Natural killer cell (primary cell): ENCODE measurements at regions of chr3 and their contacts with region 1.

Region 1: DNA sequence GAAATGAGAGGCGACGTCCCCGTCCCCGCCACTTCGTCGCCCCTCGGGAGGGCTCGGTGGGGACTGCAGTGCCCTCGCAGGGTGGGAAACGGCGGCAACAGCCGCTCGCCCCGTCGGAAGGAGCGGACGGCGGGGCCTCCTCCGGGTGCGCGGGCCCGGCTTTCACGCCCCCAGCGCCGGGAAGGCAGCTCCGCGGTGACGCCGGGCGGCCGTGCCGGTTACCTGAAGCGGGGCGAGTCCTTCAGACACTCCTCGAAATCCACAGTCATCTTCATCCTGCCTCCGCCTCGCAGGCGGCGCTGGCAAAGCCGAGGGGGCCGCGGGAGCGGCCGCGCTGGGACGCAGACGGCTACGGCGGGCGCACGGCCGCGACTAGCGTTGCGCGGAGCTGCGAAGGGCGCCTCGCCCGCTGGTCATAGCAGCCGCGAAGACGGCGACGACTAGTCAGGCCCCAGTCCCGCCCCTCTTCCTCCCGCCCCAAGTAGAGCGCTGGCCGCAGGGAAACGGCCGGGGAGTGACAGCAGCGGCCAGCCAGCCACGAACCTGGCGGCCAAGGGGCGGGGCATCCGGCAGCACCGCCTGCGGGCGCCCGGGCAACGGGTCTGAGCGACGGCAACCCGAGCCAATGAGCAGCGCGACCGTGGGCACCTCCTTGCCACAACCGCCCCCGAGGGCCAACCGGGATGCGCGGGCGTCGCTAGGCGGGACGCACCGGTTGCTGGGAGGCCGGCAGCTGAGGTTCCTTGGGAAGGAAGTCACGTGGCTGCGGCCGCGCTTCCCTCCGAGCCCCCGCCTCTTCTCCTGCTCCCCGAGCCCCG is at the start of gene ACAP2:
- DNase-seq: peak; percentile 99
- ATAC-seq: peak; percentile 88 to 96 (median 91)
- H3K4me3 ChIP-seq: peak within 1 kb of the TSS; percentile 92
- H3K4me3 Mint-ChIP-seq: peak within 1 kb of the TSS; percentile 97
- H3K27ac ChIP-seq: peak within 1 kb of the TSS; percentile 89
- H3K27ac Mint-ChIP-seq: peak within 1 kb of the TSS; percentile 92 to 97
- H3K4me1 ChIP-seq: peaks cover 17% of the 10 kb centered on the region
- H3K4me1 Mint-ChIP-seq: peaks cover 37 to 41% of the 10 kb centered on the region in 2 donors
- H3K27me3 ChIP-seq: no peaks in the 10 kb centered on the region
- H3K27me3 Mint-ChIP-seq: no peaks in the 10 kb centered on the region
- CTCF ChIP-seq: no peak
- total RNA-seq, gene ACAP2: 103 to 132 (median 128) TPM

Region 2: DNA sequence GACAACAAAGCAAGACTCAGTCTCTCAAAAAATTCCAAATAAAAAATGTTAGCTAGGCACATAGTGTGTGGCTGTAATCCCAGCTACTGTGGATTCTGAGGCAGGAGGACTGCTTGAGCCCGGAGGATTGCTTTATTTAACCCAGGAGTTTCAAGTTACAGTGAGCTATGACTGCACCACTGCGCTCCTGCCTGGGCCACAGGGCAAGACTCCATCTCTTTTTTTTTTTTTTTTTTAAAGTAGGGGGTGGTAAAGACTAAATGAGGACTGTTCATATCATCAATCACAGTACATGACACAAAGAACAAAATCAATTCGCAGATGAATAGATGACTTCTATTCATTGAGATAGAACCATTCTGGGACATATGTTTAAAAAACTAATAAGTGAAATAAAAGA is 48.1 kb before region 1 on chr3:
- intact Hi-C with region 1: loop called (anchors 5 kb)
- DNase-seq: no peak
- ATAC-seq: no peak
- H3K4me3 ChIP-seq: no peak overlapping the region
- H3K4me3 Mint-ChIP-seq: no peak overlapping the region
- H3K27ac ChIP-seq: no peak overlapping the region
- H3K27ac Mint-ChIP-seq: no peak overlapping the region
- H3K4me1 ChIP-seq: peaks cover 13% of the 10 kb centered on the region
- H3K4me1 Mint-ChIP-seq: peaks cover 33 to 35% of the 10 kb centered on the region in 2 donors
- H3K27me3 ChIP-seq: no peaks in the 10 kb centered on the region
- H3K27me3 Mint-ChIP-seq: no peaks in the 10 kb centered on the region
- CTCF ChIP-seq: no peak

Region 3: GRCh38 chr3:195542698-195543499 is 100.1 kb after region 1 on chr3 and contains the start of gene PPP1R2:
- intact Hi-C with region 1: loop called (anchors 1 kb)
- DNase-seq: peak; percentile 94 to 97
- ATAC-seq: peak; percentile 91 to 97 (median 92)
- H3K4me3 ChIP-seq: peak within 1 kb of the TSS; percentile 86
- H3K4me3 Mint-ChIP-seq: peak within 1 kb of the TSS; percentile 89
- H3K27ac ChIP-seq: peak within 1 kb of the TSS; percentile 95
- H3K27ac Mint-ChIP-seq: peak within 1 kb of the TSS; percentile 94 to 95
- H3K4me1 ChIP-seq: peaks cover 55% of the 10 kb centered on the region
- H3K4me1 Mint-ChIP-seq: peaks cover 80 to 84% of the 10 kb centered on the region in 2 donors
- H3K27me3 ChIP-seq: no peaks in the 10 kb centered on the region
- H3K27me3 Mint-ChIP-seq: no peaks in the 10 kb centered on the region
- CTCF ChIP-seq: no peak
- total RNA-seq, gene PPP1R2: 89.8 to 97.3 (median 89.9) TPM

Region 4: GRCh38 chr3:195612075-195612800 is 169.5 kb after region 1 on chr3:
- intact Hi-C with region 1: no loop called
- DNase-seq: no peak
- ATAC-seq: no peak
- H3K4me3 ChIP-seq: no peak overlapping the region
- H3K4me3 Mint-ChIP-seq: no peak overlapping the region
- H3K27ac ChIP-seq: no peak overlapping the region
- H3K27ac Mint-ChIP-seq: no peak overlapping the region
- H3K4me1 ChIP-seq: peaks cover 12% of the 10 kb centered on the region
- H3K4me1 Mint-ChIP-seq: peaks cover 6 to 13% of the 10 kb centered on the region in 2 donors
- H3K27me3 ChIP-seq: no peaks in the 10 kb centered on the region
- H3K27me3 Mint-ChIP-seq: peaks cover 0 to 4% of the 10 kb centered on the region in 2 donors
- CTCF ChIP-seq: no peak